PC-9 (cell line): ENCODE measurements at regions of chr12 and their contacts with region 1.

Region 1: DNA sequence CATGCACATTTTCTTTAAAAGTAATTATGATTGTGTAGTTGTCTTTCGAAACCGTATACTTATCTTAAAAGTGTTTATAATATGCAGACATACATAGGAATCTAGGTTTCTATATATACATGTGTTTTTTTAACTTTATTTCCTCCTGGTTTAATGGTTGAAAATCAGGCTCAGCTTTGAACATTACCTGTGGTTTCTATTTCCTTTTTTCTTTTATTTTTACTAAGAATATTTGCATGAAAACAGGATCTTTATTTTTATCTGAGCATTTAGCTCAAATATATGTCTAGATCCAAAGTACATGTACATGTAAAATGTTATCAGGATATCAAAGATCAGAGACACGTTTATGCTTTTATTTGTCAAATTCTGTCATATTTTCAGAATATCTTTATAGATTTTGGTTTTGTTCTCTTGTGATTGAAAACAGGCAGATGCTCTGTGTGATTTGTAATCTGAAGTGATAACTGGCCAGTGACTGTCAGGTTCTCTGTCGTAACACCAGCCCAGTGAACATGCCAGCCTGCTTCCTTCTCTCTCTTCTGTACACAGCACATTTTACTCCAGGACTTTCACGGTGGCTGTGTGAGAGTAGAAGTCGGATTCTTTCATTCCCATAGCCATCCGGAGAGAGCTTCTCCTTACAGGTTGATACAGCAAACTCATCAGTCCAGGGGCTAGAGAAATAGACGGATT is 13.7 kb downstream of the TCTN1 start:
- DNase-seq: no peak
- H3K4me3 ChIP-seq: no peak overlapping the region
- H3K27ac ChIP-seq: no peak overlapping the region
- H3K4me1 ChIP-seq: no peaks in the 10 kb centered on the region
- H3K27me3 ChIP-seq: no peaks in the 10 kb centered on the region
- CTCF ChIP-seq: no peak

Region 2: DNA sequence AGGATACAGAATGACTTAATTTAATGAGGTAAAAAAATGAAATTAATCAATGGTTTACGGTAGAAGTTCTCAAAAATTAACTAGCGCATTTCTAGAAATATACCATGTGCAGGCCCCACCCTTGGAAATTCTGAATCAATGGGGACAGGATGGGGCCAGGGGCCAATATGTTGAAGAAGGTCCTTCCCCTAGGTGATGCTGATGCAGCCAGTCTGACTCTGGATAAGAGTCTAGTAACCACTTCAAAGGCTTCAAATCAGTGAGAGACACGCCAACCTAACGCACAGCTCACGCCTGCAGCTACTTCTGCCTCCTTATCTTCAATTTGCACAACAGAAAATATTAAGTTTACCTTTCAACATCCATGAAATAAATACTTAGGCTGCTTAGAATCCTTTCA is 646.3 kb before region 1 on chr12:
- CTCF ChIA-PET with region 1: no interaction called
- POLR2A ChIA-PET with region 1: interaction called, 34 read pairs
- intact Hi-C with region 1: no loop called
- DNase-seq: no peak
- H3K4me3 ChIP-seq: no peak overlapping the region
- H3K27ac ChIP-seq: no peak overlapping the region
- H3K4me1 ChIP-seq: no peaks in the 10 kb centered on the region
- H3K27me3 ChIP-seq: no peaks in the 10 kb centered on the region
- CTCF ChIP-seq: no peak